ENCODE measurements at regions of chr4 and their contacts with region 1.

Region 1: DNA sequence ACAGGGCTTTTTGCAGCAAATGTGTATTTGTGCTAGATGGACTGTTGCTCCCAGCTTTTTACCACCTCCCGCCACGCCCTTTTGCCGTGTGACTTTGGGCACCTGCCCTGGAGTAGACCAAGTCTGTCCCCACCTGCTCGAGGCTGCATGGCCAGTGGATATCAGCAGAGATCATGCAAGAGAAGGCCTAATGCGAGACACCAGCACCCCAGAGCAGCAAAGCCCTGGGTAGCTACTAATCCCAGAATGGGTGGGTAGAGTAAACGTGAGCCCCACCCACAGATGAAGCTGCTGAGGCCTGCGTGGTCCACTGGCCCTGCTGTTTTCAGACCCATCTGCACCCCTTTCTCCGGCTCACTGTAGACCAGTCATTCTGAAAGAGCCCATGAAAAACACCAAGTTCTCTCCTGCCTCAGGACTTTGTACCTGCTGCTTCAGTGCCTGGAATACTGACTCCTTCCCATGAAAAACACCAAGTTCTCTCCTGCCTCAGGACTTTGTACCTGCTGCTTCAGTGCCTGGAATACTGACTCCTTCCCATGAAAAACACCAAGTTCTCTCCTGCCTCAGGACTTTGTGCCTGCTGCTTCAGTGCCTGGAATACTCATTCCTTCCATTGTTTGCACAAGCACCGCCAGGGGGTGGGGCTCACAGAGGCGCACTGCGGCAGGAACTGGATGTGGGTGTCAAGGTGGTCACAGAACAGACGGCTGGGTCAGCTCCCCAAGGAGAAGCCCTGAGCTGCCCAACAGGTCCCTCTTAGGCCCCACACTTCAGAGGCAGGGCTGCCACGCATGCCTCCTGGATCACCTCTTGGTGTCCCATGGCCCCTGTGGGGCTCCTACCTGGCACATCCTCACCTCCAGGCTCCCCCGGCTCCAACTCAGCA is 5.1 kb upstream of the TNIP2 start:
- DNase-seq: peak; percentile 56 to 60
- H3K4me3 ChIP-seq: no peak overlapping the region
- H3K27ac ChIP-seq: no peak overlapping the region
- H3K4me1 ChIP-seq: peaks cover 4 to 12% of the 10 kb centered on the region in 2 donors
- H3K27me3 ChIP-seq: no peaks in the 10 kb centered on the region
- CTCF ChIP-seq: no peak
- POLR2A ChIP-seq: no peak

Region 2: GRCh38 chr4:2934813-2935761 is 173.8 kb after region 1 on chr4:
- intact Hi-C with region 1: loop called (anchors 5 kb)
- DNase-seq: peak; percentile 94 to 95
- H3K4me3 ChIP-seq: peak overlapping the region; percentile 67 to 93 (median 84)
- H3K27ac ChIP-seq: peak overlapping the region; percentile 65 to 88 (median 81)
- H3K4me1 ChIP-seq: peaks cover 43 to 56% of the 10 kb centered on the region in 2 donors
- H3K27me3 ChIP-seq: no peaks in the 10 kb centered on the region
- CTCF ChIP-seq: peak in 1 of 6 experiments; percentile 12
- POLR2A ChIP-seq: peak; percentile 51 to 95

Region 3: DNA sequence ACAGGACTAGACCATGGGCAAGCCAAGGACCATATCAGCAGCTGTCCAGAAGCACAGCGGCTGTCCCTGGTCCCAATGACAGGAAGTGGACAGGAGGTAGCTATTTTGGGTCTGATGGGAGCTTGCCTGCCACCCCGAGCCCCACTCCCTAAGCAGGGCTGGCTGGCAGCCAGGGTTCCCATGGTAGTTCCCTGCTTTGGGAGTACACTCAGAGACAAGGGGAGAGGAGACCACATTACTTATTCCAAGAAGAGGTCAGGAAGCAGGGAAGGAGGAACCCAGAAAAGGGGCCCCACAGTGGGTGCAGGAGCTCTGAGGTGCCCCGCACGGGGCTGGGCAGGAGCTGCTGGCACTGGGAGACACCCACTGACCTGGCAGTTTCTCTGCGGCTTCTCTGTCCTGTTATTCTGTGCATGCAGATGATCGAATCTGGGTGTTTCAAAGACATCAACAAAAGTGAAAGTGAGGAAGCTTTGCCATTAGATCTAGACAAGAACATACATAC is 276.7 kb after region 1 on chr4:
- intact Hi-C with region 1: loop called (anchors 5 kb)
- DNase-seq: peak in 1 of 2 donors; percentile 20
- H3K4me3 ChIP-seq: no peak overlapping the region
- H3K27ac ChIP-seq: no peak overlapping the region
- H3K4me1 ChIP-seq: peaks cover 4 to 7% of the 10 kb centered on the region in 2 donors
- H3K27me3 ChIP-seq: no peaks in the 10 kb centered on the region
- CTCF ChIP-seq: no peak
- POLR2A ChIP-seq: no peak